Common myeloid progenitor, CD34-positive (primary cell): ENCODE measurements at regions of chr4 and their contacts with region 1.

Region 1: DNA sequence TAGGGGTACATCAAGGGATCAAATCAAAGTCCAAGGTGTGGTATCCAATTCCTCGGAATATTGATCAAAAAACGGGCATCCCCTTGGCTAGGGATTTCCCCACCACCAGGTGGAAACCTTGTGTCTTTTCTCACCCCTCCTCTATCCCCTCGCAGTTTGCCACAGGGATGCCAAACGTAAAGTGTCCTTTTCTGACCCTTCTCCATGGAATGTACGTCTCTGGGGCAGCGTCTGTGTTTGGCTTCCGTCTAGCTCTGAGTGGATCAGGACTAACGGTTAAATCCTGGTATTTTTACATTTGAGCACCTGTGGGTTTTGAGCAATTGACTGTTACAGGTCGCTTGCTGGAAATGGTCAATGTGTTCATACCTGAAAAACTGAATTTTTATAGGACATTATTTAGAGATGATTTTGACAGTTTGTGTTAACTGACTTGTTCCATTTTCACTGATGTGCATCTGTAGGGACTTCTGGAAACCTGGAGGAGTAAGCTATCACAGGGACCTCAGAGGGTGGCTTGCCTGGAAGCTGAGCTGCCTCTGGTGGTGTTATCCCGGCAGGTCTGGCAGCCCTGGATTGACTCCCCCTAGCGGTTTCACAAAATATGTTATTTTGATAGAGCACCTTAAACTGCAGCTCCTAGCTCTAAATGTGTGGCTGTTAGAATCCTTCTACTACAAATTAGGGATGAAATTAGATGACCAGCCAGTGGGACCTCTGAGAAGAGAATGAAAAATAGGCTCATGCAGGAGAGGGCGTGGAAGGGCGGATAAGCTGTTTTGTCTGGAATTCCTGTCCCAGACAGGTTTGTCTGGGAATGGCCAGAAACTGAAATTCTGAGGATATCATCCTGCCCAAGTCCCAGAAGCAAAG is 8.8 kb upstream of the MGST2 start:
- DNase-seq: peak; percentile 75 to 87 (median 86)
- H3K4me3 ChIP-seq: no peak overlapping the region
- H3K27ac ChIP-seq: no peak overlapping the region
- H3K4me1 ChIP-seq: peaks cover 13 to 16% (median 14%) of the 10 kb centered on the region in 4 experiments
- H3K27me3 ChIP-seq: no peaks in the 10 kb centered on the region

Region 2: DNA sequence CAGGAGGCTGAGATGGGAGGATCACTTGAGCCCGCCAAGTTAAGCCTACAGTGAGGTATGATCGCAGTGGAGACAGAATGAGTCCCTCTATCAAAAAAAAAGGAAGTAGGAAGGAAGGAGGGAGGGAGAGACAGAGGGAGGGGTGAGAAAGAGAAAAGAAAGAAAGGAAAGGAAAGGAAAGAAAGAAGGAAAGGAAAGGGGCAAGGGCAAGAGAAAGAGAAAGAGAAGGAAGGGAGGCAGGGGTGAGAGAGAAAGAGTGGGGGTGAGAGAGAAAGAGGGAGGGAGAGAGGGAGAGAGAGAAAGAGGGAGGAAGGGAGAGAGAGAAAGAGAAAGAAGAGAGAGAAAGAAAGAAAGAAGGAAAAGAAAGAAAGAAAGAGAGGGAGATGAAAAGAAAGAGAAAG is 493.0 kb before region 1 on chr4:
- CTCF ChIA-PET with region 1: no interaction called
- POLR2A ChIA-PET with region 1: no interaction called
- DNase-seq: no peak
- H3K4me3 ChIP-seq: peak overlapping the region in 1 of 7 experiments; percentile 33
- H3K27ac ChIP-seq: peak overlapping the region in 1 of 2 experiments; percentile 49
- H3K4me1 ChIP-seq: peaks cover 0 to 28% (median 17%) of the 10 kb centered on the region in 4 experiments
- H3K27me3 ChIP-seq: no peaks in the 10 kb centered on the region

Region 3: GRCh38 chr4:139674875-139675550 is 18.2 kb after region 1 on chr4:
- CTCF ChIA-PET with region 1: interaction called, 75 read pairs
- POLR2A ChIA-PET with region 1: interaction called, 3 read pairs
- DNase-seq: peak in 2 of 3 donors; percentile 80 to 88
- H3K4me3 ChIP-seq: no peak overlapping the region
- H3K27ac ChIP-seq: no peak overlapping the region
- H3K4me1 ChIP-seq: peaks cover 3 to 10% (median 7%) of the 10 kb centered on the region in 4 experiments
- H3K27me3 ChIP-seq: no peaks in the 10 kb centered on the region